MCF 10A (cell line): ENCODE measurements at regions of chr10 and their contacts with region 1.

Region 1: GRCh38 chr10:3785257-3785850 is 345 bp upstream of the KLF6 start:
- DNase-seq: peak; percentile 98
- H3K4me3 Mint-ChIP-seq: peak overlapping the region; percentile 96
- H3K27ac Mint-ChIP-seq: peak overlapping the region; percentile 100
- H3K4me1 Mint-ChIP-seq: peaks cover 17% of the 10 kb centered on the region
- H3K27me3 Mint-ChIP-seq: no peaks in the 10 kb centered on the region
- CTCF ChIP-seq: no peak

Region 2: DNA sequence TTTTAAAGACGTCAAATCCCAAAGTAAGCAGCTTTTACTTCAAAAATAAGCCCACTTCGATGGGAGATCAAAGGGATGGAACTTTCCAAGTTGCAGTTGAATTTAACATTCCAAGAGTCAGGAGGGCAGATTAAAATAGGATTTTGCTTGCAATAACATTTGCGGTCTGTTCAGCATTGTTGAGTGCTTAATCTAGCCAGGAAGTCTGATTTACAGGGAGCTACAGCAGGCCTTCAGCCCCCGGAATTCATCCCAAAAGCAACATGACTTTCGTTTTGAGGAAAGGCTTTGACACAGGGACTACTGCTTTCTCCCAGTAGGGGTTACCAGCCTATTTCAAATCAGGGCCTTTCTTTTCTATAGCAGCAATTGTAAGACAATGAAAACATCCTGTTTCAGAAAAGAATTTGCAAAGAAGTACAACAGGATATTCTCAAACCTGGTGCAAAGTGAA is 333.2 kb before region 1 on chr10:
- CTCF ChIA-PET with region 1: interaction called, 3 read pairs
- POLR2A ChIA-PET with region 1: interaction called, 15 read pairs
- intact Hi-C with region 1: no loop called
- DNase-seq: peak; percentile 70
- H3K4me3 Mint-ChIP-seq: peak overlapping the region; percentile 18
- H3K27ac Mint-ChIP-seq: peak overlapping the region; percentile 78
- H3K4me1 Mint-ChIP-seq: peaks cover 34% of the 10 kb centered on the region
- H3K27me3 Mint-ChIP-seq: no peaks in the 10 kb centered on the region
- CTCF ChIP-seq: peak; percentile 20

Region 3: GRCh38 chr10:3708852-3709251 is 76.5 kb before region 1 on chr10:
- CTCF ChIA-PET with region 1: no interaction called
- POLR2A ChIA-PET with region 1: no interaction called
- intact Hi-C with region 1: no loop called
- DNase-seq: no peak
- H3K4me3 Mint-ChIP-seq: no peak overlapping the region
- H3K27ac Mint-ChIP-seq: no peak overlapping the region
- H3K4me1 Mint-ChIP-seq: no peaks in the 10 kb centered on the region
- H3K27me3 Mint-ChIP-seq: no peaks in the 10 kb centered on the region
- CTCF ChIP-seq: no peak

Region 4: GRCh38 chr10:3757638-3758490 is 27.5 kb before region 1 on chr10:
- CTCF ChIA-PET with region 1: interaction called, 5 read pairs
- POLR2A ChIA-PET with region 1: interaction called, 119 read pairs
- intact Hi-C with region 1: no loop called
- DNase-seq: peak; percentile 91
- H3K4me3 Mint-ChIP-seq: peak overlapping the region; percentile 48
- H3K27ac Mint-ChIP-seq: peak overlapping the region; percentile 62
- H3K4me1 Mint-ChIP-seq: peaks cover 52% of the 10 kb centered on the region
- H3K27me3 Mint-ChIP-seq: no peaks in the 10 kb centered on the region
- CTCF ChIP-seq: no peak

Region 5: GRCh38 chr10:3866332-3866731 is 81.0 kb after region 1 on chr10:
- CTCF ChIA-PET with region 1: interaction called, 3 read pairs
- POLR2A ChIA-PET with region 1: interaction called, 13 read pairs
- intact Hi-C with region 1: no loop called
- DNase-seq: no peak
- H3K4me3 Mint-ChIP-seq: no peak overlapping the region
- H3K27ac Mint-ChIP-seq: no peak overlapping the region
- H3K4me1 Mint-ChIP-seq: peaks cover 12% of the 10 kb centered on the region
- H3K27me3 Mint-ChIP-seq: no peaks in the 10 kb centered on the region
- CTCF ChIP-seq: no peak

Region 6: GRCh38 chr10:4260483-4261124 is 475.2 kb after region 1 on chr10:
- CTCF ChIA-PET with region 1: no interaction called
- POLR2A ChIA-PET with region 1: interaction called, 59 read pairs
- intact Hi-C with region 1: no loop called
- DNase-seq: peak; percentile 60
- H3K4me3 Mint-ChIP-seq: peak overlapping the region; percentile 40
- H3K27ac Mint-ChIP-seq: peak overlapping the region; percentile 98
- H3K4me1 Mint-ChIP-seq: peaks cover 16% of the 10 kb centered on the region
- H3K27me3 Mint-ChIP-seq: no peaks in the 10 kb centered on the region
- CTCF ChIP-seq: no peak

Region 7: GRCh38 chr10:4512671-4513240 is 727.4 kb after region 1 on chr10:
- CTCF ChIA-PET with region 1: interaction called, 3 read pairs
- POLR2A ChIA-PET with region 1: interaction called, 7 read pairs
- intact Hi-C with region 1: loop called (anchors 5 kb)
- DNase-seq: peak; percentile 78
- H3K4me3 Mint-ChIP-seq: no peak overlapping the region
- H3K27ac Mint-ChIP-seq: peak overlapping the region; percentile 76
- H3K4me1 Mint-ChIP-seq: peaks cover 9% of the 10 kb centered on the region
- H3K27me3 Mint-ChIP-seq: no peaks in the 10 kb centered on the region
- CTCF ChIP-seq: peak; percentile 52

Region 8: GRCh38 chr10:4686644-4686996 is 901.3 kb after region 1 on chr10:
- CTCF ChIA-PET with region 1: no interaction called
- POLR2A ChIA-PET with region 1: interaction called, 10 read pairs
- intact Hi-C with region 1: no loop called
- DNase-seq: peak; percentile 64
- H3K4me3 Mint-ChIP-seq: no peak overlapping the region
- H3K27ac Mint-ChIP-seq: peak overlapping the region; percentile 77
- H3K4me1 Mint-ChIP-seq: peaks cover 51% of the 10 kb centered on the region
- H3K27me3 Mint-ChIP-seq: no peaks in the 10 kb centered on the region
- CTCF ChIP-seq: no peak